B cell (primary cell): ENCODE measurements at regions of chr1 and their contacts with region 1.

Region 1: GRCh38 chr1:27416387-27417111 is 24.1 kb downstream of the GPR3 start:
- DNase-seq: peak; percentile 79
- ATAC-seq: peak; percentile 66
- H3K4me3 ChIP-seq: no peak overlapping the region
- H3K4me3 Mint-ChIP-seq: no peak overlapping the region
- H3K27ac ChIP-seq: peak overlapping the region; percentile 37 to 69
- H3K27ac Mint-ChIP-seq: peak overlapping the region; percentile 69
- H3K4me1 ChIP-seq: peaks cover 38 to 39% of the 10 kb centered on the region in 2 donors
- H3K4me1 Mint-ChIP-seq: peaks cover 41% of the 10 kb centered on the region
- H3K27me3 ChIP-seq: no peaks in the 10 kb centered on the region
- H3K27me3 Mint-ChIP-seq: no peaks in the 10 kb centered on the region
- CTCF ChIP-seq: peak; percentile 78

Region 2: DNA sequence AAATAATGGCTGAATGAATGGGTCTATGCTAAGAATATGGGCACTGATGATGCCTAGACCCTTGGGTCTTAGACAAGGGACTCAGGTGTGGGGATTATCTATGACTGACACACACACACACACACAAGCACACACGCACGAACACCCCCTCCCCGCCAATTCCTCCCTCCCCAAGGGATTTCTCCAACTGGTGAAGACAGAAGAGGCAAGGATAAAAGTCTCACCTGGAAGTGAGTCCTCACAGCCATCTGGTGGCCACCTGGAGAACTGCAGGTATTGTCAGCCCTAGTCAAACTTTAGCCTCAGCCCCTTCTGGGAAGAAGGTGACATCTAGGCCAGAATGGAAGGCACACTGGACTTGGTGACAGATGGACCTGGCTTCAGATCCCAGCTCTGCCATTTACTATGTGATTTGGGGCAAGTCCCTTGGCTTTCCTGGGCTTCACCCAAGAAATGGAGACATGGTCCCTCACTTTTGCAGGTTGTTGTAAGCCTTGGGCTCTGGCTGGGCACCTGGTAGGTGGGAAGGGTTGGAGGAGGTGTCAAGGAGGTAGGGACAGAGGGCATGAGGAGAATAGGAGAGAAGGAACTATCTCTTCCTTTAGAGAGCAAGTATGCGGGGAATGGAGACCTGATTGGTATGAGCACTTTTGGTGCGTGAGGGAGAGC is 28.1 kb before region 1 on chr1:
- CTCF ChIA-PET with region 1: no interaction called
- POLR2A ChIA-PET with region 1: no interaction called
- intact Hi-C with region 1: no loop called
- DNase-seq: peak; percentile 82
- ATAC-seq: peak; percentile 25
- H3K4me3 ChIP-seq: no peak overlapping the region
- H3K4me3 Mint-ChIP-seq: peak overlapping the region; percentile 14
- H3K27ac ChIP-seq: no peak overlapping the region
- H3K27ac Mint-ChIP-seq: peak overlapping the region; percentile 69
- H3K4me1 ChIP-seq: peaks cover 12 to 16% of the 10 kb centered on the region in 2 donors
- H3K4me1 Mint-ChIP-seq: peaks cover 18% of the 10 kb centered on the region
- H3K27me3 ChIP-seq: no peaks in the 10 kb centered on the region
- H3K27me3 Mint-ChIP-seq: peaks cover 3% of the 10 kb centered on the region
- CTCF ChIP-seq: peak; percentile 88

Region 3: DNA sequence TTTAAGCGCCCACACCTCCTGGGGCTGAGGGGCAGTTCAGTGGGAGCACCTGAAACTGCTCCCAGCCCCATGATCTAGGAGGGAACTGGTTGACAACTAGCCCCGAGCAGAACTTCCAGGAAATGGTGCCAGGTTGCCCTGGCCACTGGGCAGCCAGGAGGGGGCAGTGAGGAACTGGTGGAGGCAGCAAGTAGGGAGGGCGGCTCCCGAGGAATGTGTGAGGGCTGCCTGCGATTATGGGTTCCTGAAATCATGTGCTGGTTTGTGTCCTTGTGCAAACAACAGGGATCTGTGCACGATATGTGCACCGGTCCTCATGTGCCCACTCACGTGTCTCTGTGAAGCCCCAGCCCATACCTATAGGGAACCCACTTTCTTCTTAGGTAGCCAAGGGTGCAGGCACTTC is 14.2 kb before region 1 on chr1:
- CTCF ChIA-PET with region 1: interaction called, 23 read pairs
- POLR2A ChIA-PET with region 1: no interaction called
- intact Hi-C with region 1: no loop called
- DNase-seq: peak; percentile 54
- ATAC-seq: no peak
- H3K4me3 ChIP-seq: no peak overlapping the region
- H3K4me3 Mint-ChIP-seq: peak overlapping the region; percentile 72
- H3K27ac ChIP-seq: peak overlapping the region; percentile 49 to 79
- H3K27ac Mint-ChIP-seq: peak overlapping the region; percentile 89
- H3K4me1 ChIP-seq: peaks cover 41 to 59% of the 10 kb centered on the region in 2 donors
- H3K4me1 Mint-ChIP-seq: peaks cover 58% of the 10 kb centered on the region
- H3K27me3 ChIP-seq: no peaks in the 10 kb centered on the region
- H3K27me3 Mint-ChIP-seq: no peaks in the 10 kb centered on the region
- CTCF ChIP-seq: no peak

Region 4: GRCh38 chr1:27430903-27431600 is 14.5 kb after region 1 on chr1:
- CTCF ChIA-PET with region 1: interaction called, 60 read pairs
- POLR2A ChIA-PET with region 1: interaction called, 8 read pairs
- intact Hi-C with region 1: loop called (anchors 2 kb)
- DNase-seq: peak; percentile 51
- ATAC-seq: peak; percentile 25
- H3K4me3 ChIP-seq: peak overlapping the region in 1 of 5 experiments; percentile 50
- H3K4me3 Mint-ChIP-seq: peak overlapping the region; percentile 66
- H3K27ac ChIP-seq: peak overlapping the region; percentile 50 to 70
- H3K27ac Mint-ChIP-seq: peak overlapping the region; percentile 79
- H3K4me1 ChIP-seq: peaks cover 95 to 99% of the 10 kb centered on the region in 2 donors
- H3K4me1 Mint-ChIP-seq: peaks cover 88% of the 10 kb centered on the region
- H3K27me3 ChIP-seq: no peaks in the 10 kb centered on the region
- H3K27me3 Mint-ChIP-seq: no peaks in the 10 kb centered on the region
- CTCF ChIP-seq: no peak